ENCODE measurements at regions of chr20 and their contacts with region 1.

Region 1: DNA sequence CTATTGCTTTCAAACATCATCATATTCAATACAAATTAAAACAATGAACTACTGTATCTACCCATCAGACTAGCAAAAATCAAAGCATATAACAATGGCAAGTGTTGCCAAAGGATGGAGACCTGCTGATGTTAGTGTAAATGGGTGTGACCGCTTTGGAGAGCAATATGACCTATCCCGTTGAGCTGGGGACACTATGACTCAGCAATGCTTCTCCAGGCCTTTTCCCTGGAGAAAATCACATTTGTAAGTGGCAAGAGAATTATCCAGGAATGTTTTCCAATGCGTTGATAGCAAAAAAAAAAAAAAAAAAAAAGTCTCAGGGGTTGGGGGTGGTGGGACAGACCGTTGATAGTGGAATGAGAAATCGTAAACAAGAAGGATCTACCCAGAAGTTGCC is 46.1 kb downstream of the PHACTR3 start:
- DNase-seq: no peak
- H3K4me3 ChIP-seq: no peak overlapping the region
- H3K27ac ChIP-seq: no peak overlapping the region
- H3K4me1 ChIP-seq: no peaks in the 10 kb centered on the region
- H3K27me3 ChIP-seq: peaks cover 10% of the 10 kb centered on the region
- CTCF ChIP-seq: no peak

Region 2: DNA sequence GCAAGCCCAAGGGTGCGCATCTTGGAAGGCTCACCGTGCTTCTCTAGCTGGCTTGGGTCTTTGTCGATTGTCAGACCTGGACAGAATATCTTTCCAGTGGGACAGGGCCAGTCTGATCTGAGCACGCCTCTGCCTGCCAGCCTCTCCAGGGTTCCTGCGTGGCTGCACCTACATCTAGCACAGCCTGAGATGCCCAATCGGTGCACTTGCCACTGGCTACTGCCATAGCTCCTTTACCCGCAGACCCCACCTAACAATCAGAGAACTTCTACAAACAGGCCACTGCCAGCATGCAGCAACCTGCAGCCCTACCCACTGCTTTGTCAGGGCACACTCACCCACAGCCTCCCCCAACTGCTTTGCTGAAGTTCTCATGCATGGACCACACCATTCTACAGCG is 102.8 kb before region 1 on chr20:
- CTCF ChIA-PET with region 1: interaction called, 11 read pairs
- POLR2A ChIA-PET with region 1: no interaction called
- intact Hi-C with region 1: no loop called
- DNase-seq: no peak
- H3K4me3 ChIP-seq: no peak overlapping the region
- H3K27ac ChIP-seq: no peak overlapping the region
- H3K4me1 ChIP-seq: no peaks in the 10 kb centered on the region
- H3K27me3 ChIP-seq: peaks cover 57% of the 10 kb centered on the region
- CTCF ChIP-seq: no peak

Region 3: DNA sequence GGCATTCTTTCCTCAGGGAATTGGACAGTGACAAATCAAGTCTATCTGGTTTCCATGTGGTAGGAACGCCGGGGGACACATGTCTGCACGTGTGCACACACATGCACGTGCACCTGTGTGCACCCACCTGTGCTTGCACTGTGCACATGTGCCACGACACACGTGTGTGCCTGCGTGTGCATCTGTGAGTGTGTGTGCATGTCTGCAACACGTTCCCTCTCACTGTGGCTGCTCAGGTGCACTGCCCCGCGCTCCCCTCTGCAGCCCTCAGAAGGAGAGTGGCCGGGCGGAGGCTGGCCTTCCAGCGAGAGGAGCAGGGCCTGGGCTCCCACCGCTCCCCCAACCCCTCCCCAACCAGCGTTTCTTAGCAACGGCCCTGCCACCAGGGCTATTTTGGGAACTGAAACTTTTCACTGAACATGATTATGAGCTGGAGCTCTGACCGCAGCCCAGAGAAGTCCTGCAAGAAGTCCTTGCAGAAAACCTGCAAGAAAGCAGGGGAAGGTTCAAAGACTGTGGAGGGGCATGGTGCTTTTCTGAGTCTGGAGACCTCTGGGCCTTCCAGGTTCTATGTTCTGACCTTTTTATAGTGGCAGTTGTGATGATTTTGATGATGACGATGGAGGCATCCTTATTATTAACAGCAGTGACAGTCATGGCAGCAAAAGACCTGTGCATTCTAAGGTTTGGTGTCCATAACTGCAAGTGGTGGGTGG is 101.8 kb after region 1 on chr20:
- CTCF ChIA-PET with region 1: no interaction called
- POLR2A ChIA-PET with region 1: no interaction called
- intact Hi-C with region 1: no loop called
- DNase-seq: no peak
- H3K4me3 ChIP-seq: no peak overlapping the region
- H3K27ac ChIP-seq: no peak overlapping the region
- H3K4me1 ChIP-seq: no peaks in the 10 kb centered on the region
- H3K27me3 ChIP-seq: peaks cover 53% of the 10 kb centered on the region
- CTCF ChIP-seq: no peak

Region 4: GRCh38 chr20:59788811-59789397 is 138.5 kb after region 1 on chr20:
- CTCF ChIA-PET with region 1: no interaction called
- POLR2A ChIA-PET with region 1: no interaction called
- intact Hi-C with region 1: no loop called
- DNase-seq: no peak
- H3K4me3 ChIP-seq: no peak overlapping the region
- H3K27ac ChIP-seq: no peak overlapping the region
- H3K4me1 ChIP-seq: no peaks in the 10 kb centered on the region
- H3K27me3 ChIP-seq: peaks cover 5% of the 10 kb centered on the region
- CTCF ChIP-seq: no peak

Measured in A673 (cell line).